Activated T-helper 2 cell treated with anti-CD3 and anti-CD28 coated beads, Interferon-gamma antibody, Interleukin-2, Interleukin-4, amounts not matched to agents 10 μg/mL and 5 μg/mL and 100 μg/mL, durations not matched to agents 14 hours and 24 hours and 36 hours (primary cell): ENCODE measurements at regions of chr19 and their contacts with region 1.

Region 1: DNA sequence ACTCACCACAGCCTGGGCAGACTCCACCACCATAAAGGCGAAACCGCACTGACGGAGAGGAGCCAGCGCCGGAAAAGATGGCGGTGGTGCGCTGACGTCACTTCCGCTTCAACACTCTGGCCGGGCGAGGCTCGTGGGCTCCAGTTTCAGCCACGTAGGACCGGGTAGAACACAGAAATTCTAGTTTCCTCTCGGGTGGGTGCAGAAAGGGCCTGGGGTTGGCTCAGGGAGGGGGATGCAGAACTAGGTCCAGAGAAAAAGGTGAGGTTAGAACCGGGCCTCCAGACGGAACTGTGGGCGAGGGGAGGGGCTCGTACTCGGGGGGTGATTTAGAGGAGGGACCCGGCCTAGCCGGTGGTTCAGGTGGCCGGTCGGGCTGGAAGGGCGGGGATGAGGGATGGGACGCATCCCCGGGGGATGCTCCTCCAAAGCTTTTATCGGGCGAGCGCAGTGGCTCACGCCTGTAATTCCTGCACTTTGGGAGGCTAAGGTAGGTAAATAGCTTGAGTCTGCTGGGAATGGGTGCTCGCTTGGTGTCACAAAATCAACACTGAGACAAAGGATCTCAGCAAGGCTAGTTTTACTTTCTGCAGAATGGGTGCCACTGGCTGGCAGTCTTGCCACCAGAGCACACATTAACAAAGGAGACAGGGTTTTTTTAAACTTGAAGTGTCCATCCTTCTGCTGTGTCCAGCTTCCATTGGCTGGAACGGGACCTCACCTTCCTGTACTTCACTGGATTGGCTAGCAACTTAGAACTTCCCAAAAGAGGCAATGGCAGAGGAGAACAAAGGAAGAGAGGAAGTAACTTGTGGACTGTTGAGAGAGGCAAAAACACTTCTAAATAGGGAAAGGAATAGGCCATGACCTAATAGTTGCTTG is at the start of gene ZNF561:
- DNase-seq: peak; percentile 84
- H3K4me3 Mint-ChIP-seq: peak within 1 kb of the TSS; percentile 93
- H3K27ac Mint-ChIP-seq: peak within 1 kb of the TSS; percentile 99
- H3K4me1 Mint-ChIP-seq: peaks cover 19% of the 10 kb centered on the region
- H3K27me3 Mint-ChIP-seq: no peaks in the 10 kb centered on the region
- total RNA-seq, gene ZNF561: 27.1 and 28.3 TPM in 2 replicates

Region 2: GRCh38 chr19:9140159-9140874 is 481.1 kb before region 1 on chr19 and contains the start of gene ZNF317:
- intact Hi-C with region 1: loop called (anchors 1 kb)
- DNase-seq: peak; percentile 86
- H3K4me3 Mint-ChIP-seq: peak within 1 kb of the TSS; percentile 94
- H3K27ac Mint-ChIP-seq: peak within 1 kb of the TSS; percentile 95
- H3K4me1 Mint-ChIP-seq: peaks cover 17% of the 10 kb centered on the region
- H3K27me3 Mint-ChIP-seq: no peaks in the 10 kb centered on the region
- total RNA-seq, gene ZNF317: 44.2 and 50.0 TPM in 2 replicates

Region 3: GRCh38 chr19:9644472-9644871 is 23.1 kb after region 1 on chr19:
- intact Hi-C with region 1: no loop called
- DNase-seq: no peak
- H3K4me3 Mint-ChIP-seq: no peak overlapping the region
- H3K27ac Mint-ChIP-seq: no peak overlapping the region
- H3K4me1 Mint-ChIP-seq: no peaks in the 10 kb centered on the region
- H3K27me3 Mint-ChIP-seq: no peaks in the 10 kb centered on the region

Region 4: DNA sequence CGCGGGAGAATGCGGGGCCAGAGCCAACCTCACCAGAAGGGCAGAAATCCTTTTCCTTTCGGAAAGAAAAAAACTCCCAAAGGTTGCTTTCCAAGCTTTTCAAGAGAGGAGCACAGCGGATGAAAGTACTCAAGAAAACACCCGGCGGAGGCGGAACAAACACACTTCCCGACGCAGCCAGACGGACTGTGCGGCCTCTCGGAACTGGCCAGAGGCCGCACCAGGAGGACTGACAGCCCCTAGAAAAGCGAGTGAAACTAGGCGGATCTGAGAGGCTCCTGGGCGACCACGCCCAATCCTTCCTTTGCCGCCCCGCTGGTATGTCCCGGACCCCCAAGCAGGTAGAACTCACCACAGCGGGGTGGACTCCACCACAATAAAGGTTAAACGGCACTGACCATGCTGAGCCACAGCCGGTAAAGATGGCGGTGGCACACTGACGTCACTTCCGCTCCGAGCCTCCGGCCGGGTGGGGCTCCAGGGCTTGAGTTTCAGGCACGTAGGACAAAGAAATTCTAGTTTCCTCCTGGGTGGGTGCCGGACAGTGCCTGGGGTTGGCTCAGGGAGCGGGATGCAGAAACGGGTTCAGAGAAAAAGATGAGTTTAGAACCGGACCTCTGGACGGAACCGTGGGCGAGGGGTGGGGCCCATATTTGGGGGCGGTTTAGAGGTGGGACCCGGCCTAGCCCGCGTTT is 53.4 kb after region 1 on chr19 and contains the start of gene ZNF562:
- intact Hi-C with region 1: loop called (anchors 2 kb)
- DNase-seq: peak; percentile 70
- H3K4me3 Mint-ChIP-seq: peak within 1 kb of the TSS; percentile 87
- H3K27ac Mint-ChIP-seq: peak within 1 kb of the TSS; percentile 93
- H3K4me1 Mint-ChIP-seq: peaks cover 10% of the 10 kb centered on the region
- H3K27me3 Mint-ChIP-seq: no peaks in the 10 kb centered on the region
- total RNA-seq, gene ZNF562: 17.3 and 18.2 TPM in 2 replicates

Region 5: GRCh38 chr19:9757544-9758501 is 136.4 kb after region 1 on chr19:
- intact Hi-C with region 1: no loop called
- DNase-seq: no peak
- H3K4me3 Mint-ChIP-seq: no peak overlapping the region
- H3K27ac Mint-ChIP-seq: no peak overlapping the region
- H3K4me1 Mint-ChIP-seq: no peaks in the 10 kb centered on the region
- H3K27me3 Mint-ChIP-seq: no peaks in the 10 kb centered on the region

Region 6: DNA sequence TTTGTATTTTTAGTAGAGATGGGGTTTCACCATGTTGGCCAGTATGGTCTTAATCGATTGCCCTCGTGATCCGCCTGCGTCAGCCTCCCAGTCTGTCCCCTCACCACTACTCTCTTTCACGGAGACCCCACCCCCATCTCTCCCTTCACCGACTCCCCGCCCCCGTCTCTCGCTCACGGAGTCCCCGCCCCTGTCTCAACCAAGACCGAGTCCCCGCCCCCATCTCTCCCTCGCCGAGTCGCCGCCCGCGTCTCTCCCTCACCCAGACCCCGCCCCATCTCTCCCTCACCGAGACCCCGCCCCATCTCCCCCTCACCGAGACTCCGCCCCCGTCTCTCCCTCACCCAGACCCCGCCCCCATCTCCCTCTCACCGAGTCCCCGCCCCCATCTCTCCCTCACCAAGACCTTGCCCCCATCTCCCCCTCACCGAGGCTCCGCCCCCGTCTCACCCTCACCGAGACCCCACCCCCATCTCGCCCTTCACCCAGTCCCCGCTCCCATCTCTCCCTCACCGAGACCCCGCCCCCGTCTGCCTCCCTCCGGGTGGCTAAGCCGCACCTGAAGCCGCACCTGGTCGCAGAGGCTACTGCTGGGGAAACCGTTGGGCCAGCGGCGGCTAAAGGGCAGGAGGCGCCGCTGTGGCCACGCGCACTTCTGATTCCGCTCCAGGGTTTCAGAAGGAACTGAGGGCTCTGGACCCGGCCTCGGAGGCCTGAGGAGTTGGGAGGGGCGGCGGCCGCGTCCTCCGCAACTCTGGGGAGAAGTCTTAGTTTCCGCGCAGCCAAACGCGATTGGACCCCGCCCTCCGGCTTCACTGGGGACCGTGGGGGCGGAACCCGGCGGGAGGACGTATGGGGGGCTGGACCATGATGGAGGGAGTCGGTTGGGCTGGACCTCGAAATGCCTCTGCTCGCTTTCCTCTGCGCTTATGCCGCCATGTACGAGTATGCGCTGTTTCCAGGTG is 164.3 kb after region 1 on chr19:
- intact Hi-C with region 1: loop called (anchors 1 kb)
- DNase-seq: peak; percentile 92
- H3K4me3 Mint-ChIP-seq: peak overlapping the region; percentile 88
- H3K27ac Mint-ChIP-seq: peak overlapping the region; percentile 86
- H3K4me1 Mint-ChIP-seq: peaks cover 22% of the 10 kb centered on the region
- H3K27me3 Mint-ChIP-seq: no peaks in the 10 kb centered on the region

Region 7: GRCh38 chr19:9818734-9819589 is 197.6 kb after region 1 on chr19 and contains the start of gene FBXL12:
- intact Hi-C with region 1: loop called (anchors 1 kb)
- DNase-seq: peak; percentile 100
- H3K4me3 Mint-ChIP-seq: peak within 1 kb of the TSS; percentile 90
- H3K27ac Mint-ChIP-seq: peak within 1 kb of the TSS; percentile 87
- H3K4me1 Mint-ChIP-seq: peaks cover 21% of the 10 kb centered on the region
- H3K27me3 Mint-ChIP-seq: no peaks in the 10 kb centered on the region
- total RNA-seq, gene FBXL12: 23.4 and 23.7 TPM in 2 replicates